ENCODE measurements at regions of chr6 and their contacts with region 1.

Region 1: DNA sequence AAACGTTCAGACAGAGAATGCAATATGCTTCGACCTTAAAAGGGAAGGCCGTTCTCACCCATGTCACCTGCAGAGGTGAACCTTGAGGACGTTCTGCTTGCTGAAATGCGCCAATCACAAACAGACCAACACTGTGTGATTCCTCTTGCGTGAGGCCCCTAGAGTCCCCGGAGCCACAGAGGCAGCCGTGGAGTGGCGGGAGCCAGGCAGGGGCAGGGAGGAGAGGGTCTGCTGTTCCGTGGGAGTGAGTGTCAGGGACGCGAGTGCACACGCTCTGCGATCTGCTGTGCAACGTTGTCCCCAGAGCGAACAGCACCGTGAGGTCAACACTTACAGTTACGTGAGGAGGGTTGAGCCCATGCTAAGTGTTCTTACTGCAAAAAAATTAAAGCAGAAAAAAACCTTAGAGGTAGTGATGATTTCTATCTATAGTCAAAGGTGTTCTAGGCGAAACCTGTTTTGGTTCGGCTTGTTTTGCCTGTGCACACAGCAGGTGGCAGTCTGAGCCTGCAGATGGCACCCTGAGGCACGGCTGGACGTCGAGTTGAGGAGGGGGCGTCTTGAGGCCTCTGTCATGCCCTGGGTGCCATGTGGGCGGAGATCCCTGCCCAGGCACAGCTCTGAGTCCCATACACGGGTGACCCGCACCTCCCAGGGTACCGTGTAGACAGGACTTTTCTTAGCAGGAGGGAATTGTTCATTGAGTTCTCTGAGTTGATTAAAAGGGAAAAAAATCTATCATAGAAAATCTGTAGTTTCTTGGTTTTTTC is 71.7 kb upstream of the FRMD1 start:
- DNase-seq: no peak
- ATAC-seq: peak in 1 of 2 donors; percentile 49

Region 2: GRCh38 chr6:168352111-168352510 is 201.4 kb after region 1 on chr6:
- intact Hi-C with region 1: loop called in 1 of 2 experiments (anchors 5 kb)
- DNase-seq: no peak
- ATAC-seq: no peak

Measured in left cardiac atrium (tissue), 4 donors.